K562 (cell line): ENCODE measurements at regions of chr6 and their contacts with region 1.

Region 1: DNA sequence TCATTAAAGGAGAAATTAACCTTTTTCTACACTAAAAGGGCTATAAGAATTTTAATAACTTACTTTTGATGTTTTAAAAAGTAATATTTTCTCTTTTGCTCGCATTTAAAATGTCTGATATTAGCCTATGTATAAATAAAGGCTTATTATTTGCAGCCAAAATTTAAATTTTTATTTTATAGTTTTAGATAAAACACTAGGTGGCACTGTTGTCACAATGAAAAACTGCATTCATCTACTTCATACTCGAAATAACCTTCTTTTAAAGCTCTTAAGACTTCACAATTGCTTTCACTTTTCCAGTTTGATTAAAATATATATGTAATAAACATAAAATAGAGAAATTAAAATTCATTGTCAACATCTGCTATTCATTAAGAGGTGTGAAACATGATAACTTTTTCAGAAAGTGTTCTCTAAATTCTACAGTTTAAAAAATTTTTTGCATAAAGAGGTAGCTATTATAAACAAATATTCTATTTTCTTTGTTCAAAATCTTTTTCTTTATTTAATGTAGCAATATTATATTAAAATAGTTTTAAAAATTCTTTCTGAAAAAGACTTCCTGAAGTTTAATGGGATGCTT is 78.8 kb upstream of the DEFB112 start:
- DNase-seq: peak; percentile 6 to 23 (median 20)
- ATAC-seq: no peak
- H3K4me3 ChIP-seq: no peak overlapping the region
- H3K27ac ChIP-seq: no peak overlapping the region
- H3K4me1 ChIP-seq: no peaks in the 10 kb centered on the region
- H3K27me3 ChIP-seq: no peaks in the 10 kb centered on the region
- CTCF ChIP-seq: peak in 1 of 3 experiments; percentile 64; a peak in 2 of 6 replicates
- EP300 ChIP-seq: no peak
- POLR2A ChIP-seq: no peak
- RAD21 ChIP-seq: peak; percentile 59 to 63

Region 2: GRCh38 chr6:50278663-50279062 is 150.2 kb after region 1 on chr6:
- CTCF ChIA-PET with region 1: no interaction called
- POLR2A ChIA-PET with region 1: no interaction called
- in situ Hi-C with region 1: no loop called
- intact Hi-C with region 1: no loop called
- DNase-seq: no peak
- ATAC-seq: no peak
- H3K4me3 ChIP-seq: no peak overlapping the region
- H3K27ac ChIP-seq: no peak overlapping the region
- H3K4me1 ChIP-seq: no peaks in the 10 kb centered on the region
- H3K27me3 ChIP-seq: no peaks in the 10 kb centered on the region
- CTCF ChIP-seq: no peak
- EP300 ChIP-seq: no peak
- POLR2A ChIP-seq: no peak
- RAD21 ChIP-seq: no peak

Region 3: GRCh38 chr6:50602292-50602691 is 473.8 kb after region 1 on chr6:
- CTCF ChIA-PET with region 1: interaction called, 4 read pairs
- POLR2A ChIA-PET with region 1: no interaction called
- in situ Hi-C with region 1: no loop called
- intact Hi-C with region 1: loop called (anchors 1 kb)
- DNase-seq: peak; percentile 19 to 55 (median 46)
- ATAC-seq: 0 out of 3 replicates have a peak, but pooled peaks have one; percentile 36
- H3K4me3 ChIP-seq: no peak overlapping the region
- H3K27ac ChIP-seq: no peak overlapping the region
- H3K4me1 ChIP-seq: no peaks in the 10 kb centered on the region
- H3K27me3 ChIP-seq: no peaks in the 10 kb centered on the region
- CTCF ChIP-seq: peak; percentile 44 to 75 (median 48); a peak in 4 of 6 replicates
- EP300 ChIP-seq: no peak
- POLR2A ChIP-seq: no peak
- RAD21 ChIP-seq: peak; percentile 62 to 75